ENCODE measurements at regions of chr2 and their contacts with region 1.

Region 1: DNA sequence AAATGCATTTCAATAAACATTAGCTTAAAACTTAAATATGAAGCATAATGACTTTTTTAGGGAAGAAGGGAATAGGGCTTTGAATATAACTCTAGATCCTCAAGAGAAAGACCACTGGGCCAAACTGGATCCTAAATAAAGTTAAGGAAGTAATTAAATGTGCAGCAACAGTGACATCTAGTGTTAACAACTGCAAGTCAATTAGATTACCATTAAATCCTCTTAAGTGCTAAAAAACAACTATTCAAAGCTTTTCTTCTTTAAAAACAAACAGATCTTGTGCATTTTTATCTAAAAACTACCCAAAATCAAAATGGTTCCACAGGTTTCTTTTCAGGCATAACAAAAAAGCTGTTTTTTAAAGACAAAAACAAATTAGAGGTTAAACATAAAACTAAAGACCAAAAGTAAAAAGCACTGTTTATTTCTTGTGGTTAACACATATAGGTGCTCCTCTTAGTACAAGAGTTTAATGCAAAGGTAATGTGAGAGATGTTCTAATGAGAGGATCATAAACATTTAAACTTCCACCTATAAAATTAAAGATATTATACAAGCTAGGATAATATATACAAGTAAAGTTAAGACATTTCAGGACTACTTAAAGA is 111.4 kb downstream of the THADA start:
- DNase-seq: peak; percentile 48
- H3K4me3 ChIP-seq: no peak overlapping the region
- H3K27ac ChIP-seq: peak overlapping the region; percentile 10 to 81; a peak in 3 of 4 replicates
- H3K4me1 ChIP-seq: peaks cover 0 to 15% of the 10 kb centered on the region in 2 experiments; a peak in 2 of 4 replicates
- H3K27me3 ChIP-seq: no peaks in the 10 kb centered on the region
- CTCF ChIP-seq: peak; percentile 86
- EP300 ChIP-seq: no peak
- RAD21 ChIP-seq: peak; percentile 94

Region 2: DNA sequence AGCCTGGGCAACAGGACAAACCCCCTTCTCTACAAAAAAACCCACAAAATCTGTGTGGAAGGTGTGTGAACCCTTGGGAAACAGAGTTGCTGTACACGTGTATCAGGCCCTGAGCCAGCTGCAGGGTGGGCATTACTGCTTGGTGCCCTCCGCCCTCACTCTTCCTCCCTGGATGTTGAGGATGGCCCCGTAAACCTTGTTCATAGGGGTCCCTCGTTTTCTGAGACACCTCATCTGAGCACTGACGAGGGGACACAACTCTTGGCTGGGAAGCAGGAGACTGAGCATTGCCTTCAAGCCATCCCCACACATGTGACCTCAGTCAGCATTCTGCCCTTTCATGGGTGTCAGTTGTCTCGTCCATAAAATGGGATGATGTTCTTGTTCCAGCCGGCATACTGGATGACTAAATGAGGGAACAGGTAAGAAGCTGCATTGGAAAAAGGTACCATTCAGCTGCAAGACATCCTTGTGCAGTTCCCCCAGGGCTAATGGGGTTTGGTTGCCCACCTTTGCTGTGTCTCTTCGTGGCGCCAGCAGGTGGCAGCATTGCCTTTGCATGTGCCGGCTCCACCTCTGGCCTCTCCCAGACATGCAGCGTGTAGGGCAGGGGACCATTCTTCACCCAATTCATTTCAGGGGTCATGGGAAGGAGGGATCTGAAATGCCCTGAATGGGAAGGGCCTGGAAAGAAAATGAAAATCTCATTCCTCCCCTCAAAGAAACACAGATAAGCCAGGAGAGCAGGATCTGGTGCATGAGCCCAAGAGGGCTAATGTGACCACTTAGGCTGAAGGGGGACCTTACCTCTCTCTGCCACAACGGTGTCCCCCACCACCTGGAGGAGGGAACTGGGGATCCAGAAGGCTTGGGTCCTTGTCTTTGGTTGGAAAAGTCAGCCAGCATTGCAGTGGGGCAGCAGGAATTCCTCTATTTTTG is 655.7 kb before region 1 on chr2:
- CTCF ChIA-PET with region 1: interaction called, 43 read pairs
- POLR2A ChIA-PET with region 1: no interaction called
- DNase-seq: peak; percentile 92
- H3K4me3 ChIP-seq: no peak overlapping the region; a peak in 1 of 4 replicates
- H3K27ac ChIP-seq: no peak overlapping the region
- H3K4me1 ChIP-seq: peaks cover 0 to 12% of the 10 kb centered on the region in 2 experiments; a peak in 1 of 4 replicates
- H3K27me3 ChIP-seq: no peaks in the 10 kb centered on the region
- CTCF ChIP-seq: peak; percentile 99
- EP300 ChIP-seq: no peak
- RAD21 ChIP-seq: peak; percentile 96

Region 3: GRCh38 chr2:42964439-42965083 is 519.9 kb before region 1 on chr2:
- CTCF ChIA-PET with region 1: interaction called, 11 read pairs
- POLR2A ChIA-PET with region 1: no interaction called
- DNase-seq: no peak
- H3K4me3 ChIP-seq: no peak overlapping the region
- H3K27ac ChIP-seq: peak overlapping the region; percentile 43 to 85; a peak in 3 of 4 replicates
- H3K4me1 ChIP-seq: peaks cover 38 to 41% of the 10 kb centered on the region in 2 experiments; a peak in 3 of 4 replicates
- H3K27me3 ChIP-seq: no peaks in the 10 kb centered on the region
- CTCF ChIP-seq: no peak
- EP300 ChIP-seq: peak in 1 of 2 experiments; percentile 94; a peak in 2 of 4 replicates
- RAD21 ChIP-seq: no peak

Region 4: DNA sequence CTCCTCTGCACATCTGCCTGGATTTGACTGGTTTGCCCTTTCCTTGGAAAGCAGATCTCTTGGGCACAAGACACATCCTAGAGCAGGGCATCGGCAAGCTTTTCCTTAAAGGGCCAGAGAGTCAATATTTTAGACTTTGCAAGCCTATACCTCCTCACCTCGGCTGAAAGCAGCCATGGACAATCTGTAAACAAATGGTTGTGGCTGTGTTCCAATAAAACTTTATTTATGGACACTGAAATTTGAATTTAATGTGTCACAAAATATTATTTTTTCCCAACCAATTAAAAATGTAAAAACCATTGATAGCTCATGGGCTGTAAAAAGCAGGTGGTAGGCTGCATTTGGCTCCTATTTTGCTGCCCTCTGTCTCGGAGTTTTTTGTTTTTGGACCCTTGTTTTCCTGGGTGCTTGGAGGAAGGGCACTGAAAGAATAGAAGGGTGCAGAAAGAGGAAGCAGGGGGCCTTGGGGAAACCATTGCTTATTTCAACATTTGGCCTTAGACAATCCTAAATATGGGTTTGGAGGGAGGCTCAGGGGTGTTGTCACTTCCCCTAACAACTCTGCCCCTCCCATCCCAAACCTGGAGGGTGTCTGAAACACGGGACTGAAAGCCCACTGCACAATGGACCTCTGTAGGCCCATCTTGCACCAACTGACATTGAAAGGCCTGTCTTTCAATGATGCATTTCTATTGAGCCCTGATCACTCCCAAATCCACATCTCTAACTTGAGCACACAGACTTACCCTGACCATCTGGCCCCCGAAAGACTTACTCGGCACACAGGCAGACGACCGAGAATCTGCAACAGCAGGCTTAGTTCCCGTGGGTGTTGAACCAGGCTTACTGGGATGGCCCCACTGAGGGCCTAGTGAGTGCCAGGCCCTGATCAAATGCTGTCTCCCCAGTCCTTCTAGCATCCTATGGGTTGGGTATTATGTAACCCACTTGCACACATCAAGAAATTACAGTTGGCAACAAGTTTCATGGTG is 250.9 kb before region 1 on chr2:
- CTCF ChIA-PET with region 1: interaction called, 108 read pairs
- POLR2A ChIA-PET with region 1: no interaction called
- DNase-seq: no peak
- H3K4me3 ChIP-seq: no peak overlapping the region
- H3K27ac ChIP-seq: peak overlapping the region in 1 of 2 experiments; percentile 17; a peak in 1 of 4 replicates
- H3K4me1 ChIP-seq: peaks cover 7 to 8% of the 10 kb centered on the region in 2 experiments
- H3K27me3 ChIP-seq: no peaks in the 10 kb centered on the region
- CTCF ChIP-seq: no peak
- EP300 ChIP-seq: no peak
- RAD21 ChIP-seq: no peak

Region 5: DNA sequence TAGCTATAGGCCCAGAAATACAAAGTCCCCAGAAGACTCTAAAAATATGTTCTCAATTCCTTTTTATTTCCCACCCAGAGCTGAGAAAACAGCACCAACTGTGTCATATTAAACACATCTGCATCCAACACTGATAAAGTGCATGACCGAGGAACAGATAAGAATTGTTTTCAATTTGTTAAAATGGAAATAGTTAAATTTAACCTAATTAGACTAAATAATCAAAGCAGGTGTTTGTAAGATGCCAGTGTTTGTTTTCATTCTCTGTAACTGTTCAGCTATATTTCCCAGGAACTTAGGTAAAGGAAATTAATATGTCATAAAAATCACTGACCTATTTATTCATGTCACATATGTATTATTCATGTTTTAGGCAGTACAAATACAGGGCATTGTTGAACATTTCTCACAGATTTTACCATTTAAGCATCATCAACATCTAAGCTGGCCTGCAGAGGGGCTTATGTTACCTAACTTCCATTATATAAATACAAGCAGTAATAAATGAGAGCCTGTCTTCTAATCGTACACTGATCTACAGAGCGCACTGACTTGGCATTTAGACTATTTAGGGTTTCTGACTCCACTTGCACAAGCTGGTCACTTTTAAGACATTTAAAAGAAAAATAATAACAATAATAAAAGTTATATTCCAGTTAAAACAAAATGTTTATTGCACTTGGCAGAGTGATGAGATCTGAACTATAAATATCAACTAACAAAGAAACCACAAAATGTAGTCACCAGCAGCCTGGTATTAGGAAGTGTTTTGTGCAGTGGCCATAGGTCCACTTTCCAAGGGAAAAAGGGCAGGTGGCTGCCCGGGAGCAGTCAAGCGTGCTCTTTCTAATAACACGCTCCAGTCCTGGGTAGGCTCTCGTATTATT is 171.4 kb before region 1 on chr2:
- CTCF ChIA-PET with region 1: interaction called, 21 read pairs
- POLR2A ChIA-PET with region 1: no interaction called
- DNase-seq: peak; percentile 49
- H3K4me3 ChIP-seq: no peak overlapping the region
- H3K27ac ChIP-seq: peak overlapping the region; percentile 47 to 98; a peak in 3 of 4 replicates
- H3K4me1 ChIP-seq: peaks cover 10 to 22% of the 10 kb centered on the region in 2 experiments
- H3K27me3 ChIP-seq: no peaks in the 10 kb centered on the region
- CTCF ChIP-seq: no peak
- EP300 ChIP-seq: peak; percentile 72 to 92
- RAD21 ChIP-seq: peak; percentile 16

Region 6: GRCh38 chr2:43444989-43445645 is 39.3 kb before region 1 on chr2:
- CTCF ChIA-PET with region 1: interaction called, 13 read pairs
- POLR2A ChIA-PET with region 1: no interaction called
- DNase-seq: no peak
- H3K4me3 ChIP-seq: no peak overlapping the region
- H3K27ac ChIP-seq: no peak overlapping the region
- H3K4me1 ChIP-seq: peaks cover 0 to 6% of the 10 kb centered on the region in 2 experiments; a peak in 2 of 4 replicates
- H3K27me3 ChIP-seq: no peaks in the 10 kb centered on the region
- CTCF ChIP-seq: no peak
- EP300 ChIP-seq: no peak
- RAD21 ChIP-seq: no peak

Region 7: GRCh38 chr2:43542285-43542937 is 58.0 kb after region 1 on chr2:
- CTCF ChIA-PET with region 1: interaction called, 38 read pairs
- POLR2A ChIA-PET with region 1: no interaction called
- DNase-seq: peak; percentile 52
- H3K4me3 ChIP-seq: no peak overlapping the region
- H3K27ac ChIP-seq: peak overlapping the region in 1 of 2 experiments; percentile 28; a peak in 1 of 4 replicates
- H3K4me1 ChIP-seq: peaks cover 8 to 13% of the 10 kb centered on the region in 2 experiments
- H3K27me3 ChIP-seq: no peaks in the 10 kb centered on the region
- CTCF ChIP-seq: peak; percentile 78
- EP300 ChIP-seq: no peak
- RAD21 ChIP-seq: peak; percentile 81

Measured in SK-N-SH (cell line).